ENCODE measurements at regions of chr3 and their contacts with region 1.

Region 1: GRCh38 chr3:40505599-40506462 is at the start of gene ZNF620:
- DNase-seq: peak; percentile 88
- H3K4me3 ChIP-seq: peak within 1 kb of the TSS; percentile 66 to 78 (median 76)
- H3K27ac ChIP-seq: peak within 1 kb of the TSS; percentile 96
- H3K4me1 ChIP-seq: peaks cover 19% of the 10 kb centered on the region
- H3K27me3 ChIP-seq: no peaks in the 10 kb centered on the region
- CTCF ChIP-seq: peak; percentile 34 to 51
- POLR2A ChIP-seq: no peak
- total RNA-seq, gene ZNF620: 3.6 and 4.0 TPM in 2 replicates

Region 2: GRCh38 chr3:40476478-40477470 is 29.1 kb before region 1 on chr3 and contains the start of gene ZNF619:
- CTCF ChIA-PET with region 1: interaction called, 8 read pairs
- POLR2A ChIA-PET with region 1: no interaction called
- dilution Hi-C with region 1: no loop called
- intact Hi-C with region 1: loop called (anchors 1 kb)
- DNase-seq: peak; percentile 77
- H3K4me3 ChIP-seq: peak within 1 kb of the TSS; percentile 50 to 78 (median 71)
- H3K27ac ChIP-seq: peak within 1 kb of the TSS; percentile 68
- H3K4me1 ChIP-seq: peaks cover 7% of the 10 kb centered on the region
- H3K27me3 ChIP-seq: no peaks in the 10 kb centered on the region
- CTCF ChIP-seq: no peak
- POLR2A ChIP-seq: peak; percentile 84
- total RNA-seq, gene ZNF619: 4.4 and 7.2 TPM in 2 replicates

Region 3: GRCh38 chr3:40524568-40525285 is 18.9 kb after region 1 on chr3 and contains the start of gene ZNF621:
- CTCF ChIA-PET with region 1: interaction called, 19 read pairs
- POLR2A ChIA-PET with region 1: interaction called, 10 read pairs
- dilution Hi-C with region 1: no loop called
- intact Hi-C with region 1: loop called (anchors 1 kb)
- DNase-seq: peak; percentile 87
- H3K4me3 ChIP-seq: peak within 1 kb of the TSS; percentile 69 to 91 (median 84)
- H3K27ac ChIP-seq: peak within 1 kb of the TSS; percentile 71
- H3K4me1 ChIP-seq: peaks cover 14% of the 10 kb centered on the region
- H3K27me3 ChIP-seq: no peaks in the 10 kb centered on the region
- CTCF ChIP-seq: no peak
- POLR2A ChIP-seq: peak; percentile 94
- total RNA-seq, gene ZNF621: 20.6 and 22.5 TPM in 2 replicates

Measured in endothelial cell of umbilical vein (primary cell).